ENCODE measurements at regions of chr1 and their contacts with region 1.

Region 1: DNA sequence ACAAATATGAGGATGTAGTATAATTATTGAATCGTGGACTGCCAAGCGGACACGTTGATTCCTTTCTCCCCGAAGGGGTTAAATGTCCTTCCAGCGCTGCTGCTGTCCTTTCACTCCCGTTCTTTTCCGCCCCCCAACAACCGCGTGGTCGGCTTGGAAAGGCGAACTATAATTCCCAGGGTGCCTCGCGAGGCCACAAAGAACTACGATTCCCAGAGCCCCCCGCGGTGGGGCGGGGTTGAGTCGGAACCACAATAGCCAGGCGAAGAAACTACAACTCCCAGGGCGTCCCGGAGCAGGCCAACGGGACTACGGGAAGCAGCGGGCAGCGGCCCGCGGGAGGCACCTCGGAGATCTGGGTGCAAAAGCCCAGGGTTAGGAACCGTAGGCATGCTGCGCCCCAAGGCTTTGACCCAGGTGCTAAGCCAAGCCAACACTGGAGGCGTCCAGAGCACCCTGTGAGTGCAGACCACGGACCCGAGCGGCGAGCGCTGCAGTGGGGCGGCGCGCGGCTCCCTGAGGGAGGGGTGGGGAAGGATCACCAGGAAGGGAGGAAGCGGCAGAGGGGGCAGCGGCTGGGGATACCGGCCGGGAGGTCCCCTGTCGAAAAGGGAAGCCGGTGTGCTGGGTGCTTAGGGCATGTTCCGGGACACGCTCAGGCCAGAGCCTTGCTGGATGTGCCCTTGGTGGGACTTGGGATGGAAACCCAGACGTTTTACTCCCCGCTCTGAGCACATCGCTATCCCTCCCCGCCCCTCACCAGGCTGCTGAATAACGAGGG is at the start of gene LAMTOR2:
- DNase-seq: peak; percentile 93 to 97
- H3K4me3 ChIP-seq: peak within 1 kb of the TSS; percentile 84
- H3K27ac ChIP-seq: peak within 1 kb of the TSS; percentile 85
- H3K4me1 ChIP-seq: peaks cover 11% of the 10 kb centered on the region; the same call in 1 of the 2 replicates
- H3K27me3 ChIP-seq: no peaks in the 10 kb centered on the region
- CTCF ChIP-seq: 0 out of 2 replicates have a peak, but pooled peaks have one; percentile 7
- total RNA-seq, gene LAMTOR2: 76.8 and 117 TPM in 2 replicates

Region 2: GRCh38 chr1:156012051-156012817 is 42.5 kb before region 1 on chr1:
- CTCF ChIA-PET with region 1: interaction called, 15 read pairs
- POLR2A ChIA-PET with region 1: no interaction called
- intact Hi-C with region 1: no loop called
- DNase-seq: no peak
- H3K4me3 ChIP-seq: no peak overlapping the region
- H3K27ac ChIP-seq: no peak overlapping the region
- H3K4me1 ChIP-seq: peaks cover 7% of the 10 kb centered on the region
- H3K27me3 ChIP-seq: no peaks in the 10 kb centered on the region
- CTCF ChIP-seq: no peak

Region 3: DNA sequence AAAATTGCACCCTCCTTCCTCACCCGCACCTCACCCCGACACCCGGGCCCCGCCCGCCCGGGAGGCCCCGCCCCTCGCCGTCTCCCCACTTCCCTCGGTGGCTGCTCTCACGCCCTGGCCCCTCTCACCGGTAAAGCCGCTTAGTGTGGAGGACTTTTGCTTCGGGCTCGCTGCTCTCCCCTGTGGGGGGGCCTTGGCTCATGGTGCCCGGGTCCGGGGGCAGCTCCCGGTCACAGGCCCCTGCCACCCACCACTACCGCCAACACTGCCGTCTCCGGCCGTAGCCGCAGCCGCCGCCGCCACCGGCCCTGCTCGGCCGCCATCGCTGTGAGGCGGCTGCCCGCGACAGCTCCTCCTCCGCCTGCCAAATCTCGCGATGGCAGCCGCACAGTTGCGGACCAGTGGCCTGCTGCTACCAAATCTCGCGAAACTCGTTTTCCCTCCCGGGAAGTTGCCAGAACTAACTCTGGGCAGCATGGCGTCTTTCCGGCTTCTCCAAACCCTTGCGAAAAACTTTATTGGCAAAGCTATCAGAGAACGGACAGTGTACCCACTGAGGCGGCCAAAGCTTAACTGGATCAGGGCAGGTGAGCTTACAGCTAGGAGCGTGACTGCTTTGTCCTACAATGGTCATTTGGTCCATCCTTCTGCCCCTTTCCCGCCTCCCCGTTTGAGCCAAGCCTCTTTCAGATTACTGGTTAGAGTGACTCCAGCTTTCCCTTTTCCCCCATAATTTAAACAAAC is 228.0 kb after region 1 on chr1 and contains the start of gene SMG5:
- CTCF ChIA-PET with region 1: no interaction called
- POLR2A ChIA-PET with region 1: no interaction called
- intact Hi-C with region 1: loop called (anchors 1 kb)
- DNase-seq: peak; percentile 93 to 95
- H3K4me3 ChIP-seq: peak within 1 kb of the TSS; percentile 97
- H3K27ac ChIP-seq: peak within 1 kb of the TSS; percentile 85
- H3K4me1 ChIP-seq: peaks cover 30% of the 10 kb centered on the region
- H3K27me3 ChIP-seq: no peaks in the 10 kb centered on the region
- CTCF ChIP-seq: no peak
- total RNA-seq, gene SMG5: 63.3 and 66.2 TPM in 2 replicates

Measured in PC-9 (cell line).